GM12878 (cell line): ENCODE measurements at regions of chr6 and their contacts with region 1.

Region 1: DNA sequence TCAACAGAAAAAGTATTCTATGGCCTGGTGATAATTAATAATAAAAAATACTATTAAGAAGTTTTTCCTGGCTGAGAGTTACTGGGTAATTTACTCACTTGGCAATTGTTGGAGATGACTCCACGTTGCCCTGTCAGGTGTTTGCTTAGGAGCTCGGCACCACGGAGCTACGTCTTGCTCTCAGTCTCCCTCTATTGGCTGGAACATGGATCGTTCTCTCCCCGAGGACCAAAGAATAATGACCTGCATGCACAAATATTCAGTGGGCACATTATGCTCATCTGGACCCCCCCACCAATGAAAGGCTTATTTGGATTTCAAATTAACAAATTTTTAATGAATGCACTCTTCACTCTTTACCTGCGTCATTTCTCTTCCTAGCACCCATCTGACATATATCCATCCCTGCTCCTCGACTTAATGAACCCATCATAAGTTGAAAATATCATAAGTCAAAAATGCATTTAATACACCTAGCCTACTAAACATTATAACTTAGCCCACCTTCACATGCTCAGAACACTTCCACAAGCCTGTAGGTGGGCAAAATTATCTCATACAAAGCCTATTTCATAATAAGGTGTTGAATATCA is 71.0 kb upstream of the CD83 start:
- DNase-seq: no peak
- ATAC-seq: peak; percentile 94
- H3K4me3 ChIP-seq: no peak overlapping the region
- H3K27ac ChIP-seq: no peak overlapping the region
- H3K4me1 ChIP-seq: no peaks in the 10 kb centered on the region
- H3K27me3 ChIP-seq: peaks cover 2 to 3% of the 10 kb centered on the region in 2 experiments; a peak in 2 of 4 replicates
- CTCF ChIP-seq: peak; percentile 63 to 79 (median 75)
- EP300 ChIP-seq: no peak
- POLR2A ChIP-seq: no peak
- RAD21 ChIP-seq: peak; percentile 64

Region 2: DNA sequence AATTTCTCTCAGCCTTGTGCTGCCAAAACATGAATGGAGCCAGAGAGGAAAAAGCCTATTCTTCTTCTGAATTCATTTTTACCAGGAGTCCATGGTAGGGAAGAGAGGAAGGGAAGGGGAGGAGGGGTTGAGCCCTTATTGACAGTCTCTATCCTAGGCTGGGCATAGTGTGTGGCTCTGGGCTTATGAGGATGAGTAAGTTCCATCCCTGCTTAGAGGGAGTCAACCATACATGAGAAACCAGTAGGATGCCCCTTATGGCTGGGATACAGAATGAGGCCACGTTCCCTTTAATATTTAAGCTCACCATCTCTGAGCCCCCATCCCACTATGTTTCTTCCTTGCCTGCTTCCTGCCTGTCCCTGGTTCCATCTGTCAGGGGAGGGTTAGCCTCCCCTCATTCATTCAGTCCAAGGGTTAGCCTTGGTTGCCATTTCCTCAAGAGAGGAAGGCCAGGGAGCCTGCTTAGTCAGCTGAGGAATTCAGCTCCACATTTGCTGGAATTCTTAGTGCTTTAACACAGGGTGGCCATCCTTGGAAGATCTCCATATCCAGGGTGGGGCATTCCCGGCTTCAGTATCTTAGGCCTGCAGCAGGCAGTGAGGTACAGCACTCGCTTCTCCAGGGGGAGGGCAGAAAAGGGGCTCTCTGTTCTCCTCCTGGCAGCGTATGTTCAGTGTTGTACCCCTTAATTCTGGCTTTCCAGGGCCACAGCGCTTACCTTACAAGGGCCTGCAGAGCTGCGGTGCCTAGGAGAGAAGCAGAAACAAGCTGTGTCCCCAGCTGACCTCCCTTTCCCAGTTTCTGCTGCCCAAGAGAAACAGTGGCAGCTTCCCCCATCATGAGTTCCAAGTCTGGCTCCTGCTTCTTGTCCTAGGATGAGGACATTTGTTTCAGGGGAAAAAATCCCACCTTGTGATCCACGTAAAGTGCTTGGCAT is 459.7 kb before region 1 on chr6:
- CTCF ChIA-PET with region 1: no interaction called
- POLR2A ChIA-PET with region 1: no interaction called
- RAD21 ChIA-PET with region 1: no interaction called
- SMC1A ChIA-PET with region 1: no interaction called
- in situ Hi-C with region 1: no loop called
- intact Hi-C with region 1: no loop called
- DNase-seq: no peak
- ATAC-seq: no peak
- H3K4me3 ChIP-seq: no peak overlapping the region
- H3K27ac ChIP-seq: no peak overlapping the region
- H3K4me1 ChIP-seq: no peaks in the 10 kb centered on the region
- H3K27me3 ChIP-seq: no peaks in the 10 kb centered on the region
- CTCF ChIP-seq: no peak
- EP300 ChIP-seq: no peak
- POLR2A ChIP-seq: no peak
- RAD21 ChIP-seq: no peak

Region 3: GRCh38 chr6:13914351-13914750 is 132.2 kb before region 1 on chr6:
- CTCF ChIA-PET with region 1: interaction called, 83 read pairs
- POLR2A ChIA-PET with region 1: no interaction called
- RAD21 ChIA-PET with region 1: interaction called, 7 read pairs
- SMC1A ChIA-PET with region 1: interaction called, 28 read pairs
- in situ Hi-C with region 1: no loop called
- intact Hi-C with region 1: loop called (anchors 1 kb)
- DNase-seq: no peak
- ATAC-seq: no peak
- H3K4me3 ChIP-seq: no peak overlapping the region
- H3K27ac ChIP-seq: no peak overlapping the region
- H3K4me1 ChIP-seq: no peaks in the 10 kb centered on the region
- H3K27me3 ChIP-seq: no peaks in the 10 kb centered on the region; a peak in 1 of 4 replicates
- CTCF ChIP-seq: no peak
- EP300 ChIP-seq: no peak
- POLR2A ChIP-seq: no peak
- RAD21 ChIP-seq: no peak

Region 4: DNA sequence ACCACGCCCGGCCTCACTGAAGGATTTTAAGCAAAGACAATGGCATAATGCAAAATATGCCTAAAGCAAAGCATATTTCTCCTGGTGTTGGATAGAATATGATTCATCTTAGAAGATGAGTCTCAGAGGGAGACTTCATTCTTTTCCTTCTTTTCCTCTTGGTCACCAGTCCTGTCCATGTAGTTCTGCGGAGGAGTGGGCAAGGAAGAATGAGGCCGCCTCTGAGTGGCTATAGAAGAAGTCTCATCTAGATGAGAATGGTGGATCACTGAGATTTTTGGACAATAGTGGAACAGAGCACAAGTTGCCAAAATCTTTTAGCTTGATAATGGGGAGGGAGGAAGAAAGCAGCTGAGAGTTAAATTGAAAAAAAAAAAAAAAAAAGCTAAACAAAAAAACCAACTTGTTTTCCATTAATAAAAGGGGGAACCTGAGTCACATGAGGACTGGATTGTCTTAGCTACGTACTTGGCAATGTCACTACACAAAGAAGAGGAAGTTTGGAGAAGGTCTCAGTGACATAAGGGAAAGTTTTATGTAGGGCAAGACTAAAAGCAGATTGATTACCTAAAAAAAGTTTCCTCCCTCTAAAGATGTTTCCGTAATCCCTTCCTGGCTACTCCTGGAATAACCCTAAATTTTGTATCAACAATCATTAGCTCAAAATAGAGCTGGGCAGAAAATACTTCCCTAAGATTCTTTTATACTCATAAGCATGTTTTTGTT is 77.0 kb after region 1 on chr6:
- CTCF ChIA-PET with region 1: interaction called, 19 read pairs
- POLR2A ChIA-PET with region 1: no interaction called
- RAD21 ChIA-PET with region 1: interaction called, 10 read pairs
- SMC1A ChIA-PET with region 1: interaction called, 23 read pairs
- in situ Hi-C with region 1: no loop called
- intact Hi-C with region 1: no loop called
- DNase-seq: no peak
- ATAC-seq: no peak
- H3K4me3 ChIP-seq: peak overlapping the region; percentile 48; the same call in 1 of the 2 replicates
- H3K27ac ChIP-seq: no peak overlapping the region
- H3K4me1 ChIP-seq: peaks cover 24% of the 10 kb centered on the region
- H3K27me3 ChIP-seq: no peaks in the 10 kb centered on the region
- CTCF ChIP-seq: no peak
- EP300 ChIP-seq: peak in 1 of 2 experiments; percentile 44; a peak in 1 of 4 replicates
- POLR2A ChIP-seq: no peak
- RAD21 ChIP-seq: no peak

Region 5: GRCh38 chr6:14144678-14145113 is 98.1 kb after region 1 on chr6:
- CTCF ChIA-PET with region 1: interaction called, 108 read pairs
- POLR2A ChIA-PET with region 1: no interaction called
- RAD21 ChIA-PET with region 1: interaction called, 13 read pairs
- SMC1A ChIA-PET with region 1: interaction called, 23 read pairs
- in situ Hi-C with region 1: no loop called
- intact Hi-C with region 1: loop called (anchors 5 kb)
- DNase-seq: peak; percentile 40
- ATAC-seq: peak; percentile 92
- H3K4me3 ChIP-seq: no peak overlapping the region
- H3K27ac ChIP-seq: no peak overlapping the region
- H3K4me1 ChIP-seq: peaks cover 7% of the 10 kb centered on the region; the same call in 1 of the 2 replicates
- H3K27me3 ChIP-seq: no peaks in the 10 kb centered on the region
- CTCF ChIP-seq: peak; percentile 89 to 96 (median 94)
- EP300 ChIP-seq: no peak
- POLR2A ChIP-seq: no peak
- RAD21 ChIP-seq: peak; percentile 90